ENCODE measurements at regions of chr14 and their contacts with region 1.

Region 1: GRCh38 chr14:71320107-71320733 is 413.0 kb downstream of the PCNX1 start:
- DNase-seq: peak; percentile 98 to 99
- H3K4me3 ChIP-seq: peak within 1 kb of the TSS; percentile 94
- H3K4me3 Mint-ChIP-seq: peak within 1 kb of the TSS; percentile 80
- H3K27ac Mint-ChIP-seq: peak within 1 kb of the TSS; percentile 90
- H3K4me1 ChIP-seq: peaks cover 13% of the 10 kb centered on the region; the same call in 1 of the 2 replicates
- H3K4me1 Mint-ChIP-seq: peaks cover 15% of the 10 kb centered on the region
- H3K27me3 ChIP-seq: no peaks in the 10 kb centered on the region
- H3K27me3 Mint-ChIP-seq: no peaks in the 10 kb centered on the region
- CTCF ChIP-seq: no peak

Region 2: GRCh38 chr14:70700952-70701585 is 619.2 kb before region 1 on chr14:
- CTCF ChIA-PET with region 1: interaction called, 14 read pairs
- POLR2A ChIA-PET with region 1: no interaction called
- intact Hi-C with region 1: no loop called
- DNase-seq: no peak
- H3K4me3 ChIP-seq: no peak overlapping the region
- H3K4me3 Mint-ChIP-seq: no peak overlapping the region
- H3K27ac Mint-ChIP-seq: no peak overlapping the region
- H3K4me1 ChIP-seq: peaks cover 15% of the 10 kb centered on the region
- H3K4me1 Mint-ChIP-seq: peaks cover 17% of the 10 kb centered on the region
- H3K27me3 ChIP-seq: no peaks in the 10 kb centered on the region
- H3K27me3 Mint-ChIP-seq: no peaks in the 10 kb centered on the region
- CTCF ChIP-seq: no peak

Region 3: GRCh38 chr14:70972107-70972976 is 347.9 kb before region 1 on chr14:
- CTCF ChIA-PET with region 1: no interaction called
- POLR2A ChIA-PET with region 1: no interaction called
- intact Hi-C with region 1: no loop called
- DNase-seq: peak; percentile 77 to 79
- H3K4me3 ChIP-seq: no peak overlapping the region
- H3K4me3 Mint-ChIP-seq: no peak overlapping the region
- H3K27ac Mint-ChIP-seq: no peak overlapping the region
- H3K4me1 ChIP-seq: no peaks in the 10 kb centered on the region
- H3K4me1 Mint-ChIP-seq: no peaks in the 10 kb centered on the region
- H3K27me3 ChIP-seq: no peaks in the 10 kb centered on the region
- H3K27me3 Mint-ChIP-seq: no peaks in the 10 kb centered on the region
- CTCF ChIP-seq: peak; percentile 71 to 88

Region 4: DNA sequence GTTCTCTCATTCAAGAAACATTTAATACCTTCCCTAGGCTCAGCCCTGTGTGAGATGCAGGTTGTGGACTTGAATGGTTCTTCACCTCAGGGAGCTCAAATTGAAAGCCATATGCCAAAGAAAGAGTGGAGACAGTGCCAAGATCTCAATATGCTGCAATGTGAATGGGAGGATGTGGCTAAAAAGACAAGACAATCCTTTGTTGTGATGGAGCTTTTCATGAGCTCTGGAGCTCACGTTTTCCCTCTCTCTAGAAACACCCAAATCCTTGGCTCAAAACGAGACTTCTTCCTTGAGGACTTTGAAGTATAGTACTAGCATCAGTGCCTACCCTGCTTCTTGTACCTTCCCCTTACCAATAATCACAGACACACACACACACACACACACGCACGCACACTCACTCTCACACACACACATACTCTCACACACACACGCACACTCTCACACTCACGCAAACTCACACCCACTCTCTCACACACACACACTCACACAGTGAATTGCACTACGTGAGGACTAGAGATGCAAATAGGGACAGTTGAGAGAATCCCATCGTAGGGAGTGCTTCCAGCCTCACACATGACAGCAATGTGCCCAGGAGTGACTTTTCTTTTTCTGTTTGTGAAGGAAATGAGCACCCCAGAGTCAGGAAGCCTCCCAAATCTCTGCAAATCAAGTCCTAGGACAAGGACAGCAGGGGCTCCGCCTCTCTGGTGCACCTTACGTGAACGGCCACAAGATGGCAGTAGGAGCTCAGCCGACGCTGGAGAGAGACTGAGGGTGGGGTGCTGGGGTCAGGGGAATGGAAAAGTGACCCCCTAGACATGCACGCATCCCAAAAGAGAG is 181.5 kb before region 1 on chr14:
- CTCF ChIA-PET with region 1: interaction called, 3 read pairs
- POLR2A ChIA-PET with region 1: no interaction called
- intact Hi-C with region 1: loop called (anchors 1 kb)
- DNase-seq: peak; percentile 54 to 69
- H3K4me3 ChIP-seq: no peak overlapping the region
- H3K4me3 Mint-ChIP-seq: no peak overlapping the region
- H3K27ac Mint-ChIP-seq: no peak overlapping the region
- H3K4me1 ChIP-seq: peaks cover 30% of the 10 kb centered on the region
- H3K4me1 Mint-ChIP-seq: peaks cover 5% of the 10 kb centered on the region
- H3K27me3 ChIP-seq: no peaks in the 10 kb centered on the region
- H3K27me3 Mint-ChIP-seq: no peaks in the 10 kb centered on the region
- CTCF ChIP-seq: peak; percentile 89 to 95

Region 5: DNA sequence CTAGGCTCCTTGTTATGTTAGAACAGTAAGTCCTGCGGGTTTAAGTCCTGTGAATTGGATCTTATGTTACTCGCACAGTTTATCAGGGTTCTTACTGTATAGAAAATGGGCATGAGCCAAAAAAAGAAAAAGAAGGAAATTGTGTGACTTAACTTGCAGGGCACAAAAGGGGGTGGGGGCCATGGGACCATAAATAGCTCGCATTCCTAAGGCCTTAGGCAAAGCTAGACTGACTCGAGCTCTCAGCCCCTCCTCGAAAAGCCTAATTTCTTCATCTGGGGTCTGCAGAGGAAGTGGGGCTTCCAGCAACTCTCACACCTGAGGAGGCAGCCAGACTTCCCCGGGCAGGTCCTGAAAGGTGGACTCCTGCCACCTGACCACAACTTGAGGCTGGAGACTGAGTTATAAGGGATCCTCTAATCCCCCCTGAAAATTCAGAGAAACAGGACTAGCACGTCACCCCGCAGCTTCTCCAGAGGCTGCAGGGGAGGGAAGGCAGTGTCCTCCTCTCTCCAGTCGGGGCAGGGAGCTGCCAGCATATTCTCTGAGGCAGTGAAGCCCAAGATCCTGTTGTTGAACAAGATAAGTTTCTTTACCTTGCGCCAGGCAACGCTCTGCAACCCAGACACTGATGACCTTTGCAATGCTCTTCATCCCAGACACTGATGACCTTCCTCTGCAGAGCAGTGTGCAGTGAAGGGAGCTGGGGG is 132.4 kb before region 1 on chr14:
- CTCF ChIA-PET with region 1: interaction called, 5 read pairs
- POLR2A ChIA-PET with region 1: interaction called, 10 read pairs
- intact Hi-C with region 1: loop called (anchors 1 kb)
- DNase-seq: peak; percentile 72 to 82
- H3K4me3 ChIP-seq: no peak overlapping the region
- H3K4me3 Mint-ChIP-seq: peak overlapping the region; percentile 48
- H3K27ac Mint-ChIP-seq: peak overlapping the region; percentile 95
- H3K4me1 ChIP-seq: peaks cover 31% of the 10 kb centered on the region
- H3K4me1 Mint-ChIP-seq: peaks cover 22% of the 10 kb centered on the region
- H3K27me3 ChIP-seq: no peaks in the 10 kb centered on the region
- H3K27me3 Mint-ChIP-seq: no peaks in the 10 kb centered on the region
- CTCF ChIP-seq: no peak

Region 6: DNA sequence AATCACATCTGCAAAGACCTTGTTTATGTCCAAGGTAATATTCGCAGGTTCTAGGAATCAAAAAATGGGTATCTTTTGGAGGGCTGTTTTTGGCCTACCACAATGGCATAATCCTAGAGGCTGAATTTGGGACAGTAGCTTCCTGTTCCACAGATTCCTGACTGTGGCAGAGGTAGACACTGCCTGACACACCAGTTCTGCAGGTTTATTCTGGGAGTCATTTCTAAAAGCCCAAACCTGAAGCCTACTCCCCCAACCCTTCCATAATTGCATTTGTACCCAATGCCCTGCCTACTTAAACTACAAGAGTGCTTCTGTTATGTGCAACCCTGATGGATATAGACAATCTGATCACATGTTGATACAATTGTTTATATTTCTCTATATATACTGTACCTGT is 34.1 kb before region 1 on chr14:
- CTCF ChIA-PET with region 1: no interaction called
- POLR2A ChIA-PET with region 1: no interaction called
- intact Hi-C with region 1: no loop called
- DNase-seq: no peak
- H3K4me3 ChIP-seq: no peak overlapping the region
- H3K4me3 Mint-ChIP-seq: no peak overlapping the region
- H3K27ac Mint-ChIP-seq: no peak overlapping the region
- H3K4me1 ChIP-seq: peaks cover 17% of the 10 kb centered on the region
- H3K4me1 Mint-ChIP-seq: no peaks in the 10 kb centered on the region
- H3K27me3 ChIP-seq: no peaks in the 10 kb centered on the region
- H3K27me3 Mint-ChIP-seq: no peaks in the 10 kb centered on the region
- CTCF ChIP-seq: no peak

Region 7: GRCh38 chr14:71380271-71380670 is 60.1 kb after region 1 on chr14:
- CTCF ChIA-PET with region 1: no interaction called
- POLR2A ChIA-PET with region 1: no interaction called
- intact Hi-C with region 1: loop called (anchors 5 kb)
- DNase-seq: peak; percentile 36 to 41
- H3K4me3 ChIP-seq: no peak overlapping the region
- H3K4me3 Mint-ChIP-seq: no peak overlapping the region
- H3K27ac Mint-ChIP-seq: peak overlapping the region; percentile 10
- H3K4me1 ChIP-seq: peaks cover 50% of the 10 kb centered on the region
- H3K4me1 Mint-ChIP-seq: peaks cover 52% of the 10 kb centered on the region
- H3K27me3 ChIP-seq: no peaks in the 10 kb centered on the region
- H3K27me3 Mint-ChIP-seq: no peaks in the 10 kb centered on the region
- CTCF ChIP-seq: no peak

Region 8: GRCh38 chr14:71523630-71524319 is 203.6 kb after region 1 on chr14:
- CTCF ChIA-PET with region 1: no interaction called
- POLR2A ChIA-PET with region 1: no interaction called
- intact Hi-C with region 1: loop called (anchors 5 kb)
- DNase-seq: no peak
- H3K4me3 ChIP-seq: no peak overlapping the region
- H3K4me3 Mint-ChIP-seq: no peak overlapping the region
- H3K27ac Mint-ChIP-seq: peak overlapping the region; percentile 92
- H3K4me1 ChIP-seq: peaks cover 46% of the 10 kb centered on the region
- H3K4me1 Mint-ChIP-seq: peaks cover 55% of the 10 kb centered on the region
- H3K27me3 ChIP-seq: no peaks in the 10 kb centered on the region
- H3K27me3 Mint-ChIP-seq: no peaks in the 10 kb centered on the region
- CTCF ChIP-seq: no peak

Region 9: GRCh38 chr14:71586131-71586897 is 266.1 kb after region 1 on chr14:
- CTCF ChIA-PET with region 1: no interaction called
- POLR2A ChIA-PET with region 1: no interaction called
- intact Hi-C with region 1: no loop called
- DNase-seq: no peak
- H3K4me3 ChIP-seq: no peak overlapping the region
- H3K4me3 Mint-ChIP-seq: no peak overlapping the region
- H3K27ac Mint-ChIP-seq: no peak overlapping the region
- H3K4me1 ChIP-seq: no peaks in the 10 kb centered on the region; the same call in 1 of the 2 replicates
- H3K4me1 Mint-ChIP-seq: peaks cover 12% of the 10 kb centered on the region
- H3K27me3 ChIP-seq: no peaks in the 10 kb centered on the region
- H3K27me3 Mint-ChIP-seq: no peaks in the 10 kb centered on the region
- CTCF ChIP-seq: no peak

Region 10: DNA sequence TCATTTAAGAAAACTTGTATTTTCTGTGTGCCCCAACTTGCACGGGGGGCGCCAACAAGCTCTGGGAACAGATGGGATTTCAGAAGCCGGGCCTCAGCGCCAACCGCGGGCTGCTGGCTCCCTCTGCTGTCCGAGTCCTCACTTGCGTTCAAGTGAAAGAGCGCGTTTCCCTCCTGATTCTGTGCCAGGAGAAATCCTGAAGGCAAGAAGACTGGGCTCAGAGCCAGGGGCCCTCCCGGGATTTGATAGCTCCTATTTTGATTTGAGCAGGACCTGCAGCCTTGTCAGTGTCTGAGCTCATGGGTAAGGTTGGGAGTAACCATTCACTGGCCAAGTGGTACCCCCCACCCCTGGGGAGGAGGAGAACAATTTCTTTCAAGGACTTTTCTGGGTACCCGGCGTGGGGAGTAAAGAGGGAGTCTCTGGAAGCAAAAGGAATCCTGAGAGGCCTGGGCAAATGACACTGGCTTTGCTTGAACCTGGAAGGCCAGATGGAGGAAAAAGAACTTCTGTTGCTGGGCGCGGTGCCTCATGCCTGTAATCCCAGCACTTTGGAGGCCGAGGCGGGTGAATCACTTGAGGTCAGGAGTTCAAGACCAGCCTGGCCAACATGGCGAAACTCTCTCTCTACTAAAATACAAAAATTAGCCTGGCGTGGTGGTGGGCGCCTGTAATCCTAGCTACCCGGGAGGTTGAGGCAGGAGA is 433.1 kb after region 1 on chr14:
- CTCF ChIA-PET with region 1: interaction called, 6 read pairs
- POLR2A ChIA-PET with region 1: no interaction called
- intact Hi-C with region 1: loop called (anchors 2 kb)
- DNase-seq: peak; percentile 78 to 85
- H3K4me3 ChIP-seq: no peak overlapping the region
- H3K4me3 Mint-ChIP-seq: no peak overlapping the region
- H3K27ac Mint-ChIP-seq: no peak overlapping the region
- H3K4me1 ChIP-seq: peaks cover 6% of the 10 kb centered on the region
- H3K4me1 Mint-ChIP-seq: no peaks in the 10 kb centered on the region
- H3K27me3 ChIP-seq: no peaks in the 10 kb centered on the region
- H3K27me3 Mint-ChIP-seq: no peaks in the 10 kb centered on the region
- CTCF ChIP-seq: peak; percentile 92 to 94

Measured in Caco-2 (cell line).